HEK293T (cell line): ENCODE measurements at regions of chr19 and their contacts with region 1.

Region 1: DNA sequence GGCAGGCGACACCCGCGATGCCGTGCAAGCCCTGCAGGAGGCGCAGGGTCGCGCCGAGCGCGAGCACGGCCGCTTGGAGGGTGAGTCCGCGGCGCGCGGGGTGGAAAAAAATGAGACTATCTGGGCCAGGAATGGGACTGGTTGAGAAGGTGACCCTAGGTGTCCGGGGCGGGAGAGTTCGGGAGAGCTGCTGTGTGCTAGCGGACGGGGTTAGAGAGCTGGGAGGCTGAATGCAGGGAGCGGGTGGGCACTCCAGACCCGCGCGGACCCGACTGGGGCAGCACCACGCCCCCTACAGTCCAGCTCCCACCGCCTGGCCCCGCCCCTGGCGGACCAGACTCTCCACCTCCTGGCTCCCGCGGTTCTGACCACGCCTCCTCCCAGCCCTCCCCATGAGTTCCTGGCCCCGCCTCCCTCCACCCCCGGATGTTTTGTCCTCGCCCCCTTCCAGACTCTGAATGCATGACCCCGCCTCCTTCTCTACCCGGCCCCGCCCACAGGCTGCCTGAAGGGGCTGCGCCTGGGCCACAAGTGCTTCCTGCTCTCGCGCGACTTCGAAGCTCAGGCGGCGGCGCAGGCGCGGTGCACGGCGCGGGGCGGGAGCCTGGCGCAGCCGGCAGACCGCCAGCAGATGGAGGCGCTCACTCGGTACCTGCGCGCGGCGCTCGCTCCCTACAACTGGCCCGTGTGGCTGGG is 1.5 kb downstream of the CLEC11A start:
- DNase-seq: peak; percentile 99

Region 2: GRCh38 chr19:50735869-50736268 is 11.2 kb after region 1 on chr19:
- CTCF ChIA-PET with region 1: interaction called, 9 read pairs
- POLR2A ChIA-PET with region 1: interaction called, 10 read pairs
- DNase-seq: no peak

Region 3: GRCh38 chr19:50779504-50780457 is 55.1 kb after region 1 on chr19:
- CTCF ChIA-PET with region 1: interaction called, 10 read pairs
- POLR2A ChIA-PET with region 1: interaction called, 12 read pairs
- DNase-seq: no peak